WTC11 (cell line): ENCODE measurements at regions of chr3 and their contacts with region 1.

Region 1: GRCh38 chr3:184543843-184544512 is 17.6 kb upstream of the EPHB3 start:
- DNase-seq: peak; percentile 87
- ATAC-seq: peak; percentile 65
- H3K4me3 Mint-ChIP-seq: no peak overlapping the region
- H3K27ac Mint-ChIP-seq: no peak overlapping the region
- H3K4me1 Mint-ChIP-seq: peaks cover 26% of the 10 kb centered on the region
- H3K27me3 Mint-ChIP-seq: peaks cover 6% of the 10 kb centered on the region; the same call in 1 of the 2 replicates
- CTCF ChIP-seq: peak; percentile 86

Region 2: GRCh38 chr3:184234224-184234623 is 309.8 kb before region 1 on chr3:
- CTCF ChIA-PET with region 1: no interaction called
- POLR2A ChIA-PET with region 1: no interaction called
- DNase-seq: no peak
- ATAC-seq: no peak
- H3K4me3 Mint-ChIP-seq: no peak overlapping the region
- H3K27ac Mint-ChIP-seq: no peak overlapping the region
- H3K4me1 Mint-ChIP-seq: peaks cover 6% of the 10 kb centered on the region; the same call in 1 of the 2 replicates
- H3K27me3 Mint-ChIP-seq: peaks cover 44% of the 10 kb centered on the region
- CTCF ChIP-seq: no peak

Region 3: DNA sequence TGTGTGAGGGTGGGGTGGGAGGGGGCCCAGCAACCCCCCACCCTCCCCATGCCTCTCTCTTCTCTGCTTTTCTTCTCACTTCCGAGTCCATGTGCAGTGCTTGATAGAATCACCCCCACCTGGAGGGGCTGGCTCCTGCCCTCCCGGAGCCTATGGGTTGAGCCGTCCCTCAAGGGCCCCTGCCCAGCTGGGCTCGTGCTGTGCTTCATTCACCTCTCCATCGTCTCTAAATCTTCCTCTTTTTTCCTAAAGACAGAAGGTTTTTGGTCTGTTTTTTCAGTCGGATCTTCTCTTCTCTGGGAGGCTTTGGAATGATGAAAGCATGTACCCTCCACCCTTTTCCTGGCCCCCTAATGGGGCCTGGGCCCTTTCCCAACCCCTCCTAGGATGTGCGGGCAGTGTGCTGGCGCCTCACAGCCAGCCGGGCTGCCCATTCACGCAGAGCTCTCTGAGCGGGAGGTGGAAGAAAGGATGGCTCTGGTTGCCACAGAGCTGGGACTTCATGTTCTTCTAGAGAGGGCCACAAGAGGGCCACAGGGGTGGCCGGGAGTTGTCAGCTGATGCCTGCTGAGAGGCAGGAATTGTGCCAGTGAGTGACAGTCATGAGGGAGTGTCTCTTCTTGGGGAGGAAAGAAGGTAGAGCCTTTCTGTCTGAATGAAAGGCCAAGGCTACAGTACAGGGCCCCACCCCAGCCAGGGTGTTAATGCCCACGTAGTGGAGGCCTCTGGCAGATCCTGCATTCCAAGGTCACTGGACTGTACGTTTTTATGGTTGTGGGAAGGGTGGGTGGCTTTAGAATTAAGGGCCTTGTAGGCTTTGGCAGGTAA is 198.4 kb before region 1 on chr3:
- CTCF ChIA-PET with region 1: interaction called, 19 read pairs
- POLR2A ChIA-PET with region 1: no interaction called
- DNase-seq: peak; percentile 73
- ATAC-seq: peak; percentile 92
- H3K4me3 Mint-ChIP-seq: no peak overlapping the region; the same call in 1 of the 2 replicates
- H3K27ac Mint-ChIP-seq: peak overlapping the region; percentile 78
- H3K4me1 Mint-ChIP-seq: peaks cover 16% of the 10 kb centered on the region
- H3K27me3 Mint-ChIP-seq: no peaks in the 10 kb centered on the region
- CTCF ChIP-seq: no peak

Region 4: GRCh38 chr3:184362668-184363540 is 181.1 kb before region 1 on chr3:
- CTCF ChIA-PET with region 1: interaction called, 41 read pairs
- POLR2A ChIA-PET with region 1: no interaction called
- DNase-seq: peak; percentile 97
- ATAC-seq: peak; percentile 83
- H3K4me3 Mint-ChIP-seq: peak overlapping the region; percentile 98
- H3K27ac Mint-ChIP-seq: peak overlapping the region; percentile 99
- H3K4me1 Mint-ChIP-seq: peaks cover 24% of the 10 kb centered on the region
- H3K27me3 Mint-ChIP-seq: peaks cover 6% of the 10 kb centered on the region; the same call in 1 of the 2 replicates
- CTCF ChIP-seq: peak; percentile 12; the same call in 1 of the 2 replicates

Region 5: GRCh38 chr3:184417619-184418327 is 126.2 kb before region 1 on chr3:
- CTCF ChIA-PET with region 1: interaction called, 12 read pairs
- POLR2A ChIA-PET with region 1: no interaction called
- DNase-seq: peak; percentile 79
- ATAC-seq: peak; percentile 95
- H3K4me3 Mint-ChIP-seq: no peak overlapping the region
- H3K27ac Mint-ChIP-seq: no peak overlapping the region
- H3K4me1 Mint-ChIP-seq: no peaks in the 10 kb centered on the region; the same call in 1 of the 2 replicates
- H3K27me3 Mint-ChIP-seq: no peaks in the 10 kb centered on the region
- CTCF ChIP-seq: peak; percentile 84

Region 6: GRCh38 chr3:184474897-184475296 is 69.1 kb before region 1 on chr3:
- CTCF ChIA-PET with region 1: interaction called, 57 read pairs
- POLR2A ChIA-PET with region 1: no interaction called
- DNase-seq: no peak
- ATAC-seq: no peak
- H3K4me3 Mint-ChIP-seq: no peak overlapping the region
- H3K27ac Mint-ChIP-seq: no peak overlapping the region
- H3K4me1 Mint-ChIP-seq: peaks cover 11% of the 10 kb centered on the region
- H3K27me3 Mint-ChIP-seq: no peaks in the 10 kb centered on the region
- CTCF ChIP-seq: no peak

Region 7: GRCh38 chr3:184523825-184524615 is 20.0 kb before region 1 on chr3:
- CTCF ChIA-PET with region 1: interaction called, 52 read pairs
- POLR2A ChIA-PET with region 1: interaction called, 9 read pairs
- DNase-seq: no peak
- ATAC-seq: peak; percentile 15
- H3K4me3 Mint-ChIP-seq: peak overlapping the region; percentile 52
- H3K27ac Mint-ChIP-seq: peak overlapping the region; percentile 96
- H3K4me1 Mint-ChIP-seq: peaks cover 37% of the 10 kb centered on the region
- H3K27me3 Mint-ChIP-seq: no peaks in the 10 kb centered on the region
- CTCF ChIP-seq: no peak

Region 8: GRCh38 chr3:184602416-184603150 is 58.6 kb after region 1 on chr3:
- CTCF ChIA-PET with region 1: no interaction called
- POLR2A ChIA-PET with region 1: no interaction called
- DNase-seq: no peak
- ATAC-seq: no peak; the same call in 1 of the 2 replicates
- H3K4me3 Mint-ChIP-seq: peak overlapping the region; percentile 71
- H3K27ac Mint-ChIP-seq: no peak overlapping the region
- H3K4me1 Mint-ChIP-seq: peaks cover 37% of the 10 kb centered on the region
- H3K27me3 Mint-ChIP-seq: peaks cover 84% of the 10 kb centered on the region
- CTCF ChIP-seq: no peak

Region 9: DNA sequence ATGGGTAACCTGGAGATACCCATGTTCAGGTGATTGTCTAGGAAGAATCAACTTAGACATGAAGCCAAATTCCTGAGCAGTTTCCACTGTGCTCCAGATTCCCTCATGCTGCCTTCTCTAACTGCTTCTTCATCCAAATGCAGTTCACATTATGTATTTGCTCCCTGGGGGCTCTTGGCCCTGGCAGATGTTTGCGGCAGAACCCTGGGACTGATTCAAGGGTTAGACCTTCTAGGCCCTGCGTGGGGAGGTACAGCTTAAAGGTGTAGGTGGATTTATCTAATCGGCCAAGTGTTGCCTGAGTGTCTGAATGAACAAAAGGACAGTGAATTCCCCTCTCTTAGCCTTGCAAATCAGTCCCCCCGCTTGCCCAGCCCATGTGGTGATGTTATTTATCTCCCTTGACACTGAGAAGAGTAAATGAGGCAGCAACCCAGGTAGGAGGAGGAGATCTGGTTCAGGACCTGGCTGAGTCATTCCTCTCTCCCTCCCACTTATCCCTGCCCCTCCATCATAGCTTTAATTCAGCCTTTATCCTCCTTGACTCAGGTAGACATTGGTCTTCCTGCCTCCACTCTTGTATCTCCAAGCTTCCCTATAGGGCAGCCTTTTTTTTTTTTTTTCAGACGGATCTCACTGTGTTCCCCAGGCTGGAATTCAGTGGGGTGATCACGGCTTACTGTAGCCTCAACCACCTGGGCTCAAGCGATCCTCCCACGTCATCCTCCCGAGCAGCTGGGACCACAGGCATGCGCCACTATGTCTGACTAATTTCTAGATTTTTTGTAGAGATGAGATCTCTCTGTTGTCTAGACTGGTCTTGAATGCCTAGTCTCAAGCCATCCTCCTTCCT is 113.1 kb after region 1 on chr3:
- CTCF ChIA-PET with region 1: no interaction called
- POLR2A ChIA-PET with region 1: no interaction called
- DNase-seq: no peak
- ATAC-seq: peak; percentile 22
- H3K4me3 Mint-ChIP-seq: no peak overlapping the region
- H3K27ac Mint-ChIP-seq: no peak overlapping the region
- H3K4me1 Mint-ChIP-seq: peaks cover 47% of the 10 kb centered on the region
- H3K27me3 Mint-ChIP-seq: peaks cover 4% of the 10 kb centered on the region; the same call in 1 of the 2 replicates
- CTCF ChIP-seq: no peak